CD14-positive monocyte (primary cell): ENCODE measurements at regions of chr5 and their contacts with region 1.

Region 1: GRCh38 chr5:157476702-157477408 is 16.8 kb downstream of the NIPAL4 start:
- DNase-seq: peak; percentile 35 to 64 (median 63)
- H3K4me3 ChIP-seq: no peak overlapping the region
- H3K4me3 Mint-ChIP-seq: no peak overlapping the region
- H3K27ac ChIP-seq: no peak overlapping the region
- H3K27ac Mint-ChIP-seq: no peak overlapping the region
- H3K4me1 ChIP-seq: peaks cover 13 to 15% of the 10 kb centered on the region in 2 donors
- H3K4me1 Mint-ChIP-seq: peaks cover 14% of the 10 kb centered on the region
- H3K27me3 ChIP-seq: no peaks in the 10 kb centered on the region
- H3K27me3 Mint-ChIP-seq: peaks cover 0 to 4% (median 0%) of the 10 kb centered on the region in 3 donors
- CTCF ChIP-seq: peak; percentile 75

Region 2: GRCh38 chr5:157328277-157328912 is 148.5 kb before region 1 on chr5:
- intact Hi-C with region 1: loop called (anchors 5 kb)
- DNase-seq: peak; percentile 51 to 72 (median 52)
- H3K4me3 ChIP-seq: no peak overlapping the region
- H3K4me3 Mint-ChIP-seq: no peak overlapping the region
- H3K27ac ChIP-seq: peak overlapping the region in 1 of 2 donors; percentile 20
- H3K27ac Mint-ChIP-seq: peak overlapping the region in 1 of 7 donors; percentile 12
- H3K4me1 ChIP-seq: peaks cover 8 to 12% of the 10 kb centered on the region in 2 donors
- H3K4me1 Mint-ChIP-seq: peaks cover 9% of the 10 kb centered on the region
- H3K27me3 ChIP-seq: no peaks in the 10 kb centered on the region
- H3K27me3 Mint-ChIP-seq: no peaks in the 10 kb centered on the region
- CTCF ChIP-seq: peak; percentile 89

Region 3: GRCh38 chr5:157342822-157343402 is 133.9 kb before region 1 on chr5:
- intact Hi-C with region 1: loop called in 1 of 2 experiments (anchors 5 kb)
- DNase-seq: peak in 2 of 3 donors; percentile 6 to 25
- H3K4me3 ChIP-seq: no peak overlapping the region
- H3K4me3 Mint-ChIP-seq: no peak overlapping the region
- H3K27ac ChIP-seq: no peak overlapping the region
- H3K27ac Mint-ChIP-seq: peak overlapping the region in 1 of 7 donors; percentile 23
- H3K4me1 ChIP-seq: no peaks in the 10 kb centered on the region
- H3K4me1 Mint-ChIP-seq: no peaks in the 10 kb centered on the region
- H3K27me3 ChIP-seq: no peaks in the 10 kb centered on the region
- H3K27me3 Mint-ChIP-seq: peaks cover 0 to 1% (median 0%) of the 10 kb centered on the region in 3 donors
- CTCF ChIP-seq: peak; percentile 68

Region 4: DNA sequence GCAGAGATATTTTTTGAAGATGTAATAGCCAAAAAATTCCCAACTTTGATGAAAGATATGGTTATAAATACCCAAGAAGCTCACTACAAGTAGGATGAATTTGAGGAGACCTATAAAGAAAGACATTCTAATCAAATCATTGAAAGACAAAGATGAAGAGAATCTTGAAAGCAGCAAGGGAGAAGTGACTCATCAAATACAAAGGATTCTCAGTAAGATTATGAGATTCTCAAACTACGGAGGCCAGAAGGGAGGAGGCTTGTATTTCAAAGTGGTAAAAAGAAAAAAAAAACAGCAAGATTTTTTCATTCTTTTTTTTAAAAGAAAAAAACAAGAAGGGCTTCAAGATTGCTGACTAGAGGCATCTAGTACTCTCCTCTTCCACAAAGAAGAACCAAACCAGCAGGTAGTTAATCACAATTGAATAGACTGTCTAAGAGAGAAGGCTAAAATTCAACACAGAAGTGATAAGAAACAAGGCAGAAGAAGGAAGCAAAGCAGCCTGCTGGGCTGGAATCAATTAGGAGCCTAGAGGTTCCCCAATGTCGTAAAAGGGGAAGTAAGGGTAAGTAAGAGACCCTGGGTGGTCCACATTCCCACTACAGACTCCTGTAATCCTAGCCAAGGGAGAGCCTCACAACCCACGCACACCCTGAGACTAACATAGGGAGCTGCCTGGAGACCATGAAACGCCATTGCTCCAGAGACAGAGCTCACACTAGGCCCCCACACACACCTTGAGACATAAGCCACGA is 75.9 kb before region 1 on chr5:
- intact Hi-C with region 1: no loop called
- DNase-seq: no peak
- H3K4me3 ChIP-seq: no peak overlapping the region
- H3K4me3 Mint-ChIP-seq: no peak overlapping the region
- H3K27ac ChIP-seq: no peak overlapping the region
- H3K27ac Mint-ChIP-seq: no peak overlapping the region
- H3K4me1 ChIP-seq: no peaks in the 10 kb centered on the region
- H3K4me1 Mint-ChIP-seq: no peaks in the 10 kb centered on the region
- H3K27me3 ChIP-seq: no peaks in the 10 kb centered on the region
- H3K27me3 Mint-ChIP-seq: no peaks in the 10 kb centered on the region
- CTCF ChIP-seq: no peak

Region 5: GRCh38 chr5:157431544-157432200 is 45.2 kb before region 1 on chr5:
- intact Hi-C with region 1: loop called (anchors 5 kb)
- DNase-seq: peak; percentile 56 to 75 (median 72)
- H3K4me3 ChIP-seq: no peak overlapping the region
- H3K4me3 Mint-ChIP-seq: no peak overlapping the region
- H3K27ac ChIP-seq: no peak overlapping the region
- H3K27ac Mint-ChIP-seq: peak overlapping the region in 2 of 7 donors; percentile 30 to 78
- H3K4me1 ChIP-seq: no peaks in the 10 kb centered on the region
- H3K4me1 Mint-ChIP-seq: peaks cover 5% of the 10 kb centered on the region
- H3K27me3 ChIP-seq: no peaks in the 10 kb centered on the region
- H3K27me3 Mint-ChIP-seq: peaks cover 2 to 6% (median 5%) of the 10 kb centered on the region in 3 donors
- CTCF ChIP-seq: peak; percentile 70